Testis (tissue), 5 donors: ENCODE measurements at regions of chr18 and their contacts with region 1.

Region 1: GRCh38 chr18:76405681-76406356 is 89.2 kb downstream of the ZNF516 start:
- DNase-seq: peak; percentile 83
- H3K4me3 ChIP-seq: no peak overlapping the region
- H3K27ac ChIP-seq: no peak overlapping the region
- H3K4me1 ChIP-seq: peaks cover 34% of the 10 kb centered on the region
- H3K27me3 ChIP-seq: no peaks in the 10 kb centered on the region
- CTCF ChIP-seq: peak; percentile 44 to 77 (median 76)
- POLR2A ChIP-seq: no peak

Region 2: GRCh38 chr18:76528477-76529432 is 122.9 kb after region 1 on chr18:
- intact Hi-C with region 1: no loop called
- DNase-seq: peak; percentile 85
- H3K4me3 ChIP-seq: peak overlapping the region; percentile 38 to 69
- H3K27ac ChIP-seq: peak overlapping the region; percentile 90 to 91
- H3K4me1 ChIP-seq: peaks cover 11% of the 10 kb centered on the region
- H3K27me3 ChIP-seq: no peaks in the 10 kb centered on the region
- CTCF ChIP-seq: no peak
- POLR2A ChIP-seq: no peak

Region 3: GRCh38 chr18:76709659-76710645 is 304.1 kb after region 1 on chr18:
- intact Hi-C with region 1: loop called (anchors 10 kb)
- DNase-seq: peak; percentile 88
- H3K4me3 ChIP-seq: peak overlapping the region; percentile 19 to 46
- H3K27ac ChIP-seq: no peak overlapping the region
- H3K4me1 ChIP-seq: no peaks in the 10 kb centered on the region
- H3K27me3 ChIP-seq: no peaks in the 10 kb centered on the region
- CTCF ChIP-seq: peak; percentile 86 to 94 (median 92)
- POLR2A ChIP-seq: no peak